Common myeloid progenitor, CD34-positive (primary cell): ENCODE measurements at regions of chr17 and their contacts with region 1.

Region 1: DNA sequence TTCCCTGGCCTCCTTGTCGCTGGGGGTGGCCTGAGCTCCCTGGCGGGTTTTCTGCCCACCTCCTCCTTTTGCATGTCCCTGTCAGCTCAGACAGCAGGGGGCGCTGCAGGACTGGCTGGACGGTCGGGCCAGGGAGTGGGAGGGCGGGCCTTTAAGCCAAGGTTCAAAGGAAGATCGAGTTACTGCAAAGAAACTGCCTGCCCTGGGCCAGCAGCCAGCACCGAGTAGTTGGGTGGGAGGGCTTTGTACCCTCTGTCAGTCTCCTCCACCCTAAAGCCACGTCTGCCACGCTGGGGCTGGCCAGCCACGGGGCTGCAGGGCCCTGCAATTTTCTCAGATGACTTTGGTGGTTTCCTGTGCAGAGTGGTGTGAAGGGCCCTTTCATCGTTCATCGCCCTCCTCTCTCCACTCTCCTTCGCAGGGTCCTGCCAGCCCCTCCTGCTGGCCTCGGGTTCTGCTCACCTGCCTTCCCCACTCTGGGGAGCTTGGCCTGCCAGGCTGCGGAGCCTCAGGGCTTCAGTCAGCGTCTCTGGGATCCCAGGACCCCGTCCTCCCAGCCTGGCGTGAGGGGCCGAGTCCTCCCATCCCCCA is 12.3 kb downstream of the GPR142 start:
- DNase-seq: peak; percentile 85 to 91 (median 90)
- H3K4me3 ChIP-seq: peak overlapping the region in 4 of 7 experiments; percentile 3 to 58 (median 20)
- H3K27ac ChIP-seq: no peak overlapping the region
- H3K4me1 ChIP-seq: peaks cover 0 to 21% (median 16%) of the 10 kb centered on the region in 4 experiments
- H3K27me3 ChIP-seq: no peaks in the 10 kb centered on the region

Region 2: DNA sequence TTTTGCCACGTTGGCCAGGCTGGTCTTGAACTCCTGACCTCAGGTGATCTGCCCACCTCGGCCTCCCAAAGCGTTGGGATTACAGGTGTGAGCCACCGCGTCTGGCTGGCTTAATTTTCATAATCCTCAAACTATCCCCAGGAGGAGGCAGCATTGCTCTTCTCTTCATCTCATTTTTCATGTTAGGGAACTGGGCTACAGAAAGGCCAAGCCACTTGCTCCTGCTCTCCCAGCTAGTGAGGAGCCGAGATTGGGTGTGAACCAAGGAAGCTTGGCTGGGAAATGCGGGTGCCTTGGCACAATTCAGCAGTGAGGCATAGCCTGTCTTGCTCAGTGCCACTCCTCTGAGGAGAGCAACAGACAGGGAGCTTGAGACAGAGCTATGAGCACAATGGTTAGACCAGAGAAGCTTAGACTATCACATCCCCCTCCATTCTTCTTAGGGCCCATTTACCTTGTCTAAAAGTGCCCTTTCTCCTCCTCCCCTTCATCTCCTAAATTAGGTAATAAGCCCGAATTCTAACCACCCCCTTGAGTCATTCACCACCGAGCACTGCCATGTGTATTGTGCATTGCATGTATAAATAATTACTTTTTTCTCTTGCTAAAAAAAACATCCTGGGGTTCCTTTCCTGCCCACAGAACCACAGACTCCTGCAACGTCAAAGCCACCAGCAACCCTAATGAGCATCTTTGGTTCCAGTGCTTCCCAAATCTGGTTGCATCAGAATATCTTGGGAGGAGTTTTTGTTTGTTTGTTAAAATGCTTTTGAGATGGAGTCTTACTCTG is 73.5 kb before region 1 on chr17:
- CTCF ChIA-PET with region 1: no interaction called
- POLR2A ChIA-PET with region 1: no interaction called
- DNase-seq: peak; percentile 47 to 72 (median 65)
- H3K4me3 ChIP-seq: no peak overlapping the region
- H3K27ac ChIP-seq: no peak overlapping the region
- H3K4me1 ChIP-seq: peaks cover 0 to 35% (median 19%) of the 10 kb centered on the region in 4 experiments
- H3K27me3 ChIP-seq: no peaks in the 10 kb centered on the region

Region 3: DNA sequence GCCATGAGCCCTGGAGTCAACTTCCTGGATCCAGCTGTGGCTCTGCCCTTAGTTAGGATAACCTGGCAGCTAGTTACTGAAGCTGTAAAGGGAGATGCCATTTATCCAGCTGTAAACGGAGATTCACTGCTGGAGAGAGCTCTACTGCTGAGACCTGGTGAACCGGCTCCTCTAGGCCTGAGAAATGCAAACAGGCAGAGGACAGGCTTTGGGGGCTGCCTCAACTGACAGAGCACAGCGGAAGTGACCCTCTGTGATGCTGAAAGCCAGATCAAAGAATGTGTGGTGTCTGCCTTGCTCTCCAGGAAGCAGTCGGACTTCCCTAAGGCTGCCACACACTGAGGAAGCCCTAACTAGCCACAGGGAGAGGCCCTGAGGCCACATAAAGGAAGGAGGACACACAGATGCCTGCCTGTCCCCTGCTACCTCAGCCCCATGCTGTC is 30.4 kb after region 1 on chr17:
- CTCF ChIA-PET with region 1: no interaction called
- POLR2A ChIA-PET with region 1: no interaction called
- DNase-seq: peak in 1 of 3 donors; percentile 10
- H3K4me3 ChIP-seq: no peak overlapping the region
- H3K27ac ChIP-seq: no peak overlapping the region
- H3K4me1 ChIP-seq: peaks cover 0 to 8% (median 0%) of the 10 kb centered on the region in 4 experiments
- H3K27me3 ChIP-seq: peaks cover 0 to 2% (median 0%) of the 10 kb centered on the region in 5 experiments

Region 4: GRCh38 chr17:74437702-74438101 is 58.1 kb after region 1 on chr17:
- CTCF ChIA-PET with region 1: interaction called, 10 read pairs
- POLR2A ChIA-PET with region 1: no interaction called
- DNase-seq: peak in 2 of 3 donors; percentile 52 to 55
- H3K4me3 ChIP-seq: no peak overlapping the region
- H3K27ac ChIP-seq: no peak overlapping the region
- H3K4me1 ChIP-seq: peaks cover 0 to 23% (median 15%) of the 10 kb centered on the region in 4 experiments
- H3K27me3 ChIP-seq: peaks cover 0 to 17% (median 5%) of the 10 kb centered on the region in 5 experiments

Region 5: GRCh38 chr17:74493381-74493833 is 113.8 kb after region 1 on chr17:
- CTCF ChIA-PET with region 1: interaction called, 20 read pairs
- POLR2A ChIA-PET with region 1: no interaction called
- DNase-seq: peak; percentile 68 to 81 (median 75)
- H3K4me3 ChIP-seq: no peak overlapping the region
- H3K27ac ChIP-seq: no peak overlapping the region
- H3K4me1 ChIP-seq: peaks cover 0 to 29% (median 3%) of the 10 kb centered on the region in 4 experiments
- H3K27me3 ChIP-seq: no peaks in the 10 kb centered on the region

Region 6: DNA sequence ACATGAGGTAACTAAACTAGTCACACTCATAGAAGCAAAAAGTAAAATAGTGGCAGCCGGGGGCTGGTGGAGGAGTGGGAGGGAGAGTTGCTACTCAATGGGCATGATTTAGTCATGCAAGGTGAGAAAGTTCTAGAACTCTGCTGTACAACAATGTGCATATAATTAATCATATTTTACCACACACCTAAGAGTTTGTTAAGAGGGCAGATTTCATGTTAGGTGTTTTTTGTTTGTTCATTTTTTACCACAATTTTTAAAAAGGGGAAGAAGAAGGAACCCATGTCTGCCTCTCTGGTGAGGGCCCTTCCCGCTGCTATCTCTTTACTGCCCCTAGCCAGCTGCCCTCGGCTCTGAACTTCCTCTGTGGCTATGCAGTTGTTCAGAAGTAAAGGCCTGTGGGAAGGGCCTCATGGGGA is 140.4 kb after region 1 on chr17:
- CTCF ChIA-PET with region 1: interaction called, 10 read pairs
- POLR2A ChIA-PET with region 1: no interaction called
- DNase-seq: peak; percentile 75 to 93 (median 91)
- H3K4me3 ChIP-seq: no peak overlapping the region
- H3K27ac ChIP-seq: no peak overlapping the region
- H3K4me1 ChIP-seq: peaks cover 0 to 54% (median 39%) of the 10 kb centered on the region in 4 experiments
- H3K27me3 ChIP-seq: no peaks in the 10 kb centered on the region